ENCODE measurements at regions of chr3 and their contacts with region 1.

Region 1: GRCh38 chr3:28036599-28037575 is 204.5 kb upstream of the CMC1 start:
- DNase-seq: no peak
- ATAC-seq: peak; percentile 83
- H3K4me3 ChIP-seq: no peak overlapping the region
- H3K27ac ChIP-seq: no peak overlapping the region
- H3K4me1 ChIP-seq: no peaks in the 10 kb centered on the region
- H3K27me3 ChIP-seq: no peaks in the 10 kb centered on the region
- CTCF ChIP-seq: no peak
- EP300 ChIP-seq: peak in 1 of 2 experiments; percentile 34; a peak in 1 of 4 replicates
- POLR2A ChIP-seq: no peak
- RAD21 ChIP-seq: no peak

Region 2: GRCh38 chr3:28022916-28023315 is 14.0 kb before region 1 on chr3:
- CTCF ChIA-PET with region 1: interaction called, 12 read pairs
- POLR2A ChIA-PET with region 1: interaction called, 6 read pairs
- RAD21 ChIA-PET with region 1: interaction called, 221 read pairs
- SMC1A ChIA-PET with region 1: interaction called, 296 read pairs
- in situ Hi-C with region 1: no loop called
- intact Hi-C with region 1: loop called (anchors 2 kb)
- DNase-seq: no peak
- ATAC-seq: 0 out of 3 replicates have a peak, but pooled peaks have one; percentile 8
- H3K4me3 ChIP-seq: no peak overlapping the region
- H3K27ac ChIP-seq: no peak overlapping the region
- H3K4me1 ChIP-seq: no peaks in the 10 kb centered on the region; the same call in 1 of the 2 replicates
- H3K27me3 ChIP-seq: no peaks in the 10 kb centered on the region
- CTCF ChIP-seq: no peak
- EP300 ChIP-seq: no peak
- POLR2A ChIP-seq: no peak
- RAD21 ChIP-seq: no peak

Region 3: GRCh38 chr3:28057539-28057938 is 20.7 kb after region 1 on chr3:
- CTCF ChIA-PET with region 1: interaction called, 5 read pairs
- POLR2A ChIA-PET with region 1: interaction called, 8 read pairs
- RAD21 ChIA-PET with region 1: interaction called, 46 read pairs
- SMC1A ChIA-PET with region 1: interaction called, 46 read pairs
- in situ Hi-C with region 1: no loop called
- intact Hi-C with region 1: no loop called
- DNase-seq: no peak
- ATAC-seq: peak; percentile 41; the same call in 2 of the 3 replicates
- H3K4me3 ChIP-seq: no peak overlapping the region
- H3K27ac ChIP-seq: no peak overlapping the region
- H3K4me1 ChIP-seq: no peaks in the 10 kb centered on the region
- H3K27me3 ChIP-seq: no peaks in the 10 kb centered on the region
- CTCF ChIP-seq: no peak
- EP300 ChIP-seq: no peak
- POLR2A ChIP-seq: no peak
- RAD21 ChIP-seq: 0 out of 2 replicates have a peak, but pooled peaks have one; percentile 13

Region 4: DNA sequence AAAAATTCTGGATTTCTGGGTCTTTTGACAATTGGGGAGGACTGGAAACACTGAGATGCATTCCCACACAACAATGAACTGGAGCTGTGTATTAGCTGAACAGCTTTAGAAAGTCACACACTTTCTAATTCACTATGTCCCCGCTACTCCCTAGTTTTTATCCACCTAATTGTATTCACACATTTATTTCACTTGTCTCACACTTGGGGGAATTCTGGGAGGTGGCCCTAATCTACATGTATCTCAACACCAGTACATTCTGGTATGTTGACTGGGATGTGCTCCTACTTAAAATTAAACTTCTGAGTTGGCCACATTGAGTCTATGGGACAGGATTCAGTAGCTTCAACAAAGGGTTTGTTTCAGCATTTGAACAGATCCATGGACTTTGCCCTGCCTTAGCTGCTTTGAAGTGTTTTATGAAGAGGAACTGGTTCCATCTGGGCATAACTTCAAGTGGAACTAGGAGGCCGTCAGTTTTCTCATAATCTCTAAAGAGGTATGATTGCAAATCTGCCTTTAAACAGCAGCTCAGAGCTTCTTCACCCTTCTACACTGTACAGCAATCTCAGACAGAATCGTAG is 98.0 kb after region 1 on chr3:
- CTCF ChIA-PET with region 1: interaction called, 5 read pairs
- POLR2A ChIA-PET with region 1: interaction called, 9 read pairs
- RAD21 ChIA-PET with region 1: interaction called, 16 read pairs
- SMC1A ChIA-PET with region 1: interaction called, 40 read pairs
- in situ Hi-C with region 1: no loop called
- intact Hi-C with region 1: no loop called
- DNase-seq: no peak
- ATAC-seq: peak; percentile 16
- H3K4me3 ChIP-seq: no peak overlapping the region
- H3K27ac ChIP-seq: no peak overlapping the region
- H3K4me1 ChIP-seq: no peaks in the 10 kb centered on the region
- H3K27me3 ChIP-seq: no peaks in the 10 kb centered on the region
- CTCF ChIP-seq: no peak
- EP300 ChIP-seq: no peak
- POLR2A ChIP-seq: no peak
- RAD21 ChIP-seq: no peak

Region 5: GRCh38 chr3:28286595-28286994 is 249.7 kb after region 1 on chr3:
- CTCF ChIA-PET with region 1: interaction called, 4 read pairs
- POLR2A ChIA-PET with region 1: no interaction called
- RAD21 ChIA-PET with region 1: no interaction called
- SMC1A ChIA-PET with region 1: interaction called, 3 read pairs
- in situ Hi-C with region 1: no loop called
- intact Hi-C with region 1: loop called (anchors 5 kb)
- DNase-seq: peak; percentile 8
- ATAC-seq: peak; percentile 96
- H3K4me3 ChIP-seq: no peak overlapping the region
- H3K27ac ChIP-seq: no peak overlapping the region
- H3K4me1 ChIP-seq: no peaks in the 10 kb centered on the region
- H3K27me3 ChIP-seq: no peaks in the 10 kb centered on the region
- CTCF ChIP-seq: peak; percentile 48 to 63 (median 50); a peak in 5 of 6 replicates
- EP300 ChIP-seq: no peak
- POLR2A ChIP-seq: no peak
- RAD21 ChIP-seq: peak; percentile 73

Region 6: GRCh38 chr3:28386049-28386448 is 349.2 kb after region 1 on chr3:
- CTCF ChIA-PET with region 1: no interaction called
- POLR2A ChIA-PET with region 1: no interaction called
- RAD21 ChIA-PET with region 1: no interaction called
- SMC1A ChIA-PET with region 1: no interaction called
- in situ Hi-C with region 1: no loop called
- intact Hi-C with region 1: no loop called
- DNase-seq: no peak
- ATAC-seq: no peak
- H3K4me3 ChIP-seq: no peak overlapping the region
- H3K27ac ChIP-seq: no peak overlapping the region
- H3K4me1 ChIP-seq: no peaks in the 10 kb centered on the region
- H3K27me3 ChIP-seq: no peaks in the 10 kb centered on the region
- CTCF ChIP-seq: no peak
- EP300 ChIP-seq: no peak
- POLR2A ChIP-seq: no peak
- RAD21 ChIP-seq: no peak

Measured in GM12878 (cell line).